HCT116 (cell line): ENCODE measurements at regions of chr1 and their contacts with region 1.

Region 1: GRCh38 chr1:94247138-94248094 is 10.0 kb upstream of the ARHGAP29 start:
- DNase-seq: peak; percentile 67
- ATAC-seq: peak; percentile 81
- H3K4me3 ChIP-seq: peak overlapping the region; percentile 83
- H3K27ac ChIP-seq: peak overlapping the region; percentile 92
- H3K4me1 ChIP-seq: peaks cover 47 to 80% of the 10 kb centered on the region in 2 experiments
- H3K27me3 ChIP-seq: no peaks in the 10 kb centered on the region
- CTCF ChIP-seq: no peak
- POLR2A ChIP-seq: peak; percentile 80
- RAD21 ChIP-seq: peak; percentile 10; the same call in 1 of the 2 replicates

Region 2: GRCh38 chr1:93919780-93920179 is 327.6 kb before region 1 on chr1:
- CTCF ChIA-PET with region 1: no interaction called
- POLR2A ChIA-PET with region 1: no interaction called
- RAD21 ChIA-PET with region 1: no interaction called
- intact Hi-C with region 1: no loop called
- DNase-seq: no peak
- ATAC-seq: no peak
- H3K4me3 ChIP-seq: no peak overlapping the region
- H3K27ac ChIP-seq: no peak overlapping the region
- H3K4me1 ChIP-seq: no peaks in the 10 kb centered on the region
- H3K27me3 ChIP-seq: no peaks in the 10 kb centered on the region
- CTCF ChIP-seq: no peak
- POLR2A ChIP-seq: no peak
- RAD21 ChIP-seq: no peak

Region 3: DNA sequence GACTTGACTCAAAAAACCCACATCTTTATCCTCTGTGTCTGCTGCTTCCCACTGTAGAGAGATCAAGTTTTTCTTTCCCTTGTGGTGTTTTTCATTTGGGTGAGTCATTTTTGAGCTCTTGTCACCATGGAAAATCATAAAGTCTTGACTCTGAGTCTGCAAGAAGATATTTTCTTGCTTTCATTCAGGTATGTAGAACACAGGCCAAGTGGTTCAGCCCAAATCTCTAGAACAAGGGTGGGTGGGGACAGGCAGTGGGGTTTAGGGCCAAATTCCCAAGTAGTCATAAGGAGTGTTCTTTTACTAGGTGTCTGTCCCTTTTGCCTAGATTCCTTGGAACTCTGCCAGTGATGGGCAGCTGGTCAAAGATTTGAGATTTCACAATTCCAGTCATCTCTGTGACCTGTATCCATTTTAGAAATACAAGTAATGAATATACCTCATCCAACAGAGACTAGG is 11.5 kb after region 1 on chr1:
- CTCF ChIA-PET with region 1: no interaction called
- POLR2A ChIA-PET with region 1: interaction called, 23 read pairs
- RAD21 ChIA-PET with region 1: no interaction called
- intact Hi-C with region 1: no loop called
- DNase-seq: peak; percentile 71
- ATAC-seq: peak; percentile 75
- H3K4me3 ChIP-seq: no peak overlapping the region
- H3K27ac ChIP-seq: peak overlapping the region; percentile 49; the same call in 1 of the 2 replicates
- H3K4me1 ChIP-seq: peaks cover 22 to 59% of the 10 kb centered on the region in 2 experiments
- H3K27me3 ChIP-seq: no peaks in the 10 kb centered on the region
- CTCF ChIP-seq: no peak
- POLR2A ChIP-seq: no peak
- RAD21 ChIP-seq: no peak

Region 4: GRCh38 chr1:94316836-94317789 is 69.7 kb after region 1 on chr1:
- CTCF ChIA-PET with region 1: no interaction called
- POLR2A ChIA-PET with region 1: interaction called, 20 read pairs
- RAD21 ChIA-PET with region 1: no interaction called
- intact Hi-C with region 1: no loop called
- DNase-seq: no peak
- ATAC-seq: peak; percentile 70
- H3K4me3 ChIP-seq: no peak overlapping the region
- H3K27ac ChIP-seq: peak overlapping the region; percentile 63
- H3K4me1 ChIP-seq: peaks cover 75 to 88% of the 10 kb centered on the region in 2 experiments
- H3K27me3 ChIP-seq: no peaks in the 10 kb centered on the region
- CTCF ChIP-seq: no peak
- POLR2A ChIP-seq: no peak
- RAD21 ChIP-seq: no peak